Heart right ventricle (tissue), 16 donors: ENCODE measurements at regions of chr6 and their contacts with region 1.

Region 1: DNA sequence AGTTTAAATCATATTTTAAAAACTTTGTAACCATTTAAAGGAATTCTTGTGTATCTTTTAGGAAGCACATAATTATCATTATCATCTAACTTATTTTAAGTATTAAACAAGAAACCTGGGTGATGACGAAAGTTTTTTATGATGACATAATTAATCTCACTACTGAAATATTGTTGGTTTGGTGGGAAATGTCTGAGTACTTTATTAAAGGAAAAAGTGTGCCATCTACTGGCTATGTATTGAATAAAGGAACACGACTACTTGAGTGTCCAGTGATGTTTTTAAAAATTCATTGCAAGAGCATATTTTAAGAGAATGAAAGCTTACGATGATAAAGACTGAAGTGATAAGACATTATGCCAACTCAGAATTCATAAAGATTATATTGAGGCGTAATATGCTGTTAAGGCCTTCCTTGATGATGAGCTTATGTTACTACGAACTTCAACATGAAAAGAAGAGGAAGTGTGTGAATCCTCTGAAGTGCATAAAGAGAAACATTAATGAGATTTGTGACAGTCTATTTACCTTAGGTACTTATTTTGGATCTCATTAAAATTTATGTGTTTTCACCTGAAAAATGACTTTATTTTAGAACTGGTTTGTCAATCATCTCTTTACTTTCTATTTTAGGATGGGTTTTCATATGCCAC is 12.0 kb upstream of the TRMT11 start:
- DNase-seq: no peak
- ATAC-seq: peak in 3 of 8 donors; percentile 47 to 67 (median 51)
- H3K4me3 ChIP-seq: no peak overlapping the region
- H3K27ac ChIP-seq: no peak overlapping the region
- H3K4me1 ChIP-seq: no peaks in the 10 kb centered on the region
- H3K27me3 ChIP-seq: no peaks in the 10 kb centered on the region
- CTCF ChIP-seq: peak in 8 of 9 donors; percentile 29 to 74 (median 62)

Region 2: DNA sequence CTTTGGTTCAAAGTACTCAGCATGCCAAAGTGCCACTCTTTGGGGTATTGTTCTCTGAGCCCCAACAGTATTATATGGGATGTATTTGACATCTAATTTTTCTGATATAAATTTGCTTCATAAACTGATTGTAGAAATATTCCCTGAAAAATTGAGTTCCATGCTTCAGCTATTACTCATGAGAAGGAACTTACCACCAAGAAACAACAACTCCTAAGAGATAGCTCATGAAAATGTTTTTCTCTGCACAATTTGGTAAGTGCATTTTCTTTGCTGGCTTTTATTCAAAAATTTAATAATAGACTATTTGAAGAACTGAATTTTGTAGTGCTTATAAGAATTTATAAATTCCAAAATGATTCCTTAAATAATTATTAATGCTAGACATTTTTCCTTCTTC is 833.5 kb before region 1 on chr6:
- intact Hi-C with region 1: no loop called
- DNase-seq: no peak
- ATAC-seq: no peak
- H3K4me3 ChIP-seq: no peak overlapping the region
- H3K27ac ChIP-seq: no peak overlapping the region
- H3K4me1 ChIP-seq: no peaks in the 10 kb centered on the region
- H3K27me3 ChIP-seq: no peaks in the 10 kb centered on the region
- CTCF ChIP-seq: no peak

Region 3: DNA sequence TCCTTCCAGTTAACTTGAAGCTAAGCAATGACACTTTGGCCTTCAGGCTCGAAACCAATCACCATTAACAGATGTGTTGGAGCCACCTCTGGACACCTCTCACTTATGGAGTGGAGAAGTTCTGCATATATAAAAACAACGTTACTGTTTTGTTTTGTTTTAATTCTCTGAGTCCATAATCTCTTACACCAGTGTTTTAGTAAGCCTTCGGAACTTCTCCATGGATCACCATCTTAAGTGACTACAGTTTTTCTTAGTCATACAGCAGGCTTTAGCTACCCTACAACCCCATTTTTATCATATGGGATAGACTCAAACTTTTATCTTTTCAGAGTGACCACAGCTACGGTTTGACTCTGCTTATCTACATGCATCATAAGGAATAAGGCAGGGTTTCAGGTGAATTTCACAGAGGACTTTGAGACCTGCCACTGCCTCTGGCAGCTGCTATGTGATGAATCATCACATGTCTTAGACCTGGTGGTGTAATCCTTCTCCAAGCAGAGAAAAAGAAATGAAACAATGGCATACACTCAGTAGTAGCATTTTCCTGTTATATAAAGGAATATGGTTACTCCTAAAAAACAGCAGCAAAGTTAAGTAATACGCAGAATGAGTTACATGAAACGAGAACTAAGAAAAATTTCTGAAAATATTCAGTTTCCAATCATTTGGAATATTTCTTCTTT is 667.0 kb before region 1 on chr6:
- intact Hi-C with region 1: loop called in 8 of 10 experiments (anchors 5 to 10 kb)
- DNase-seq: no peak
- ATAC-seq: no peak
- H3K4me3 ChIP-seq: no peak overlapping the region
- H3K27ac ChIP-seq: no peak overlapping the region
- H3K4me1 ChIP-seq: peaks cover 0 to 4% (median 0%) of the 10 kb centered on the region in 9 donors
- H3K27me3 ChIP-seq: peaks cover 0 to 9% (median 0%) of the 10 kb centered on the region in 7 donors
- CTCF ChIP-seq: no peak

Region 4: DNA sequence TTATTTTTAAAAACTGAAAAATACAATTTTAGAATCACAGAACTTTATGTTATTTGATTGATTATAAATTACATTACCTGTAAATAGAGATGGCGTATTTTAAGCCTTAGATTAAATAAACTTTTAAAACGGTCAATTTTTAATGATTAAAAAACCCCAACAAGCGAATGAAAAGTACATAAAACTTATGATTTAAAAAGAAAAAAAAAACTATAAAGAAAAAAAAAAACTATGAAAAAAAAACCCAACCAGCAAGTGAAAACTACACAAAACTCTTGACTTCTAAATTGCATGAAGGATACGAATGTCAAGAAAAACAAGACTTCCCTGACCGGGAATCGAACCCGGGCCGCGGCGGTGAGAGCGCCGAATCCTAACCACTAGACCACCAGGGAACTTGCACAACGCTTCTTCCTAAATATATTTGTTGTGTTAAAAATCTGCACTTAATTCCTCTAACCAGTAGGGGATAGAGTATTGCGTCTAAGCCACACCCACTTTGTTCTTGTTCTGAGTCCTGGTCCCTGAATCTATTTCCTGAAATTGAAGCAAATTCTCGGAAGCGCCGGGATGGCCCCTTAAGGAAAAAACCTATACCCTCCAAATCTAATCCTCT is 194.3 kb before region 1 on chr6:
- intact Hi-C with region 1: loop called in 3 of 10 experiments (anchors 5 kb)
- DNase-seq: peak; percentile 81 to 88
- ATAC-seq: peak; percentile 95 to 99 (median 98)
- H3K4me3 ChIP-seq: peak overlapping the region; percentile 31 to 83 (median 64)
- H3K27ac ChIP-seq: peak overlapping the region; percentile 75 to 95 (median 94)
- H3K4me1 ChIP-seq: peaks cover 0 to 18% (median 7%) of the 10 kb centered on the region in 9 donors
- H3K27me3 ChIP-seq: no peaks in the 10 kb centered on the region
- CTCF ChIP-seq: peak in 7 of 9 donors; percentile 29 to 55 (median 43)

Region 5: GRCh38 chr6:125858427-125859320 is 115.7 kb before region 1 on chr6:
- intact Hi-C with region 1: loop called in 3 of 10 experiments (anchors 2 to 5 kb)
- DNase-seq: peak in 1 of 2 donors; percentile 53
- ATAC-seq: peak in 7 of 8 donors; percentile 75 to 90 (median 85)
- H3K4me3 ChIP-seq: no peak overlapping the region
- H3K27ac ChIP-seq: no peak overlapping the region
- H3K4me1 ChIP-seq: peaks cover 0 to 6% (median 2%) of the 10 kb centered on the region in 9 donors
- H3K27me3 ChIP-seq: no peaks in the 10 kb centered on the region
- CTCF ChIP-seq: peak; percentile 26 to 79 (median 68)

Region 6: GRCh38 chr6:125906158-125906998 is 68.0 kb before region 1 on chr6:
- intact Hi-C with region 1: loop called in 1 of 10 experiments (anchors 5 kb)
- DNase-seq: peak; percentile 16 to 37
- ATAC-seq: peak in 2 of 8 donors; percentile 39 to 55
- H3K4me3 ChIP-seq: no peak overlapping the region
- H3K27ac ChIP-seq: no peak overlapping the region
- H3K4me1 ChIP-seq: peaks cover 0 to 22% (median 0%) of the 10 kb centered on the region in 9 donors
- H3K27me3 ChIP-seq: no peaks in the 10 kb centered on the region
- CTCF ChIP-seq: peak in 8 of 9 donors; percentile 40 to 83 (median 56)

Region 7: DNA sequence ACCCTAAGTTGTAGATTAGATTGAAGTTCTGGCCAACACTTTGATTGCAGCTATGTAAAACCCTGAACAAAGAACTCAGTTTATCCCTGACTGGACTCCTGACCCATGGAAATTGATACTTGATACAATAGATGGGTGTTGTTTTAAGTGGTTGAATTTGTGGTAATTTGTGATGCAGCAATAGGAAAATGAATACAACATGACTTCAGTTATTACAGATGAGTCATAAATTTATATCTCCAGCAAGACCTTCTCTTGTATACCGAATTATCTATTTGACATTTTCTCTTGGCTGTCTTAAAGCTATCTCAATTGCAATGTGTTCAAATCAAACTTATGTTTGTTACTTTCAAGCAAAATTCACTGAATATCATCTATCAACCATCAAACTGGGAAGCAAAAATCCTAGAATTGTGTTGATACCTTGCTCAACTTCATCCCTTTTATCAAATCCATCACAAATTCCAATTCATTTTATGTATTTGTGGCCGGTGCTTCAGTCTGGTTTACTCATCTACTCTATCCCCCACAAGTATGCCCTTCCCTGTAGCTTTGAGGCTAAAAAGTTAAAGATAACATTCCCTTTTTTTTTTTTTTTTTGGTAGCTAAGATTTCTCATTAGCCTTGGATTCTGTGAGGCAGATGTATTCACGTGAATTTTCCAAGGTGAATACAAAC is 236.2 kb after region 1 on chr6:
- intact Hi-C with region 1: no loop called
- DNase-seq: no peak
- ATAC-seq: no peak
- H3K4me3 ChIP-seq: no peak overlapping the region
- H3K27ac ChIP-seq: no peak overlapping the region
- H3K4me1 ChIP-seq: no peaks in the 10 kb centered on the region
- H3K27me3 ChIP-seq: no peaks in the 10 kb centered on the region
- CTCF ChIP-seq: no peak